Lower leg skin (tissue), 4 donors: ENCODE measurements at regions of chr9 and their contacts with region 1.

Region 1: GRCh38 chr9:20622330-20623020 is at the start of gene MLLT3:
- DNase-seq: peak; percentile 93 to 99
- H3K4me3 ChIP-seq: peak within 1 kb of the TSS; percentile 61
- CTCF ChIP-seq: no peak
- POLR2A ChIP-seq: no peak
- total RNA-seq, gene MLLT3: 10.6 to 15.2 (median 12.5) TPM

Region 2: DNA sequence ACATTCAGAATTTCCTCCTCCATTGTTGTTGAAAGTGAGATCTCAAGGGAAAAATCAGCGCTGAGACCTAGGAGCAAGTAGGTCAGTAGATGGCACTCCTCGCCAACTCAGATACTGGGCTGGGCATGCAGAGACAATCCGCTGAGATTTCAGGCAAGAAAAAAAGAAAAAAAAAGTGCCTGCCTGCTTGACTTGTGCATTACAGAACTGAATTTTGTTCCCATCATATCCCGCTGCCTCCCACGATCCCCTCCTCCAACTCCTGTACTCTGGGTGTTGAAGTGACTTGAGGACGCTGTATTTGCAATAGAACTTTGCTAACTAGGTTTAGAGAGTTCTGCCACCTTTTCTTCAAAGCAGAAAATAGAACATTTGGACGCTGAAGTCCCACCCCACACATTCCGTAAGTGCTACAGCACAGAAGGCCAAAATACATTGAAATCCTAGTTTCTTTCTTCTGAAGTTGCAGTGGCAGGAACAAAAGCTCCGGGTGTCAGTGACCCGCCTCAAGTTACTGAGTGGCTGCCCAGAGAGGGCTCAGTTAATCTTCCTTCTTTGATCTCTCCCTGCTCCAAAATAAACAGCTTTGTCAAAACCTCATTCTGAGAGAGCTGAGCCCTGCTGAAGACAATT is 266.0 kb before region 1 on chr9:
- intact Hi-C with region 1: loop called (anchors 10 kb)
- DNase-seq: peak in 1 of 2 donors; percentile 65
- H3K4me3 ChIP-seq: no peak overlapping the region
- CTCF ChIP-seq: no peak
- POLR2A ChIP-seq: no peak

Region 3: DNA sequence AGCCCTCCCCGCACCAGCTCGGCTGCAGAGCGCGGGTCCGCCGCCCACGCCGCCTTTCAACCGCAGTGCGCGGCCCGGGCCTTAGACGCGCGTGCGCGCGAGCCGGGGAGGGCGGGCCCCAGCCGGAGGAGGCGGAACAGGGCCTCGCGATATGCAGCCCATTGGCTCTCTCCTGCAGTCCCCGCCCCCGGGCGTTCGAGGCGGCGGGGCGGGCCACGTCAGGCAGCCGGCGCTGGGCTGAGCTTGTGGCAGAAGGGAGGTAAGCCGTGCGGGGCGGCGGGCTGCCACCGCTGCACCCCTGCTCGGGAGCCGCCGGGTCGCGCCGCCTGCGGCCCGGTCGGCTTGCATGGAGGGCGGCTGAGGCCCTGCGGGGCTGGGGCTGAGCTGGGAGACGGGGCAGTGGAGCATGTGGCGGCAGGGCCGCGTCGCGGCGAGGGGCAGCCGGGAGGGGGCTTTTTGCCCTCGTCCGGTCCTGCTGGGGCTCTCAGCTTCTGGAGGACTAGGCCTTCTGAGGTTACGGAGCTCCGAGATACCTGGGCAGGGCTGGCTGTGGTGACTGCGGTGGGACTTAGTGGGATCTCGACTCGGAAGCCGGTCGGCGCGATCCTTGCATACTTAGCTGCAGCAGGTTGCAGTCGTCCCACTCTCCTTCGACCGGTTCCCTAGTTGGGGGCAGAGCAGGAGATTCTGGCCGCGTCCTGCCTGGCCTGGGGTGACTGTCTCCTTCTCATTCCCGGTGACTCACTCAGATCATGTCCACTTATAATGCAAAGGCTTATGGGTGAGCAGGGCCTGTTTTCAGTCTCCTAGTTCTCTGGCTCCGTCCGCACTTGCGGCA is 61.8 kb after region 1 on chr9 and contains the start of gene FOCAD:
- intact Hi-C with region 1: loop called (anchors 5 kb)
- DNase-seq: peak; percentile 93 to 99
- H3K4me3 ChIP-seq: peak within 1 kb of the TSS; percentile 75
- CTCF ChIP-seq: no peak
- POLR2A ChIP-seq: no peak
- total RNA-seq, gene FOCAD: 13.9 to 31.2 (median 22.0) TPM

Region 4: GRCh38 chr9:20941174-20941690 is 318.8 kb after region 1 on chr9:
- intact Hi-C with region 1: loop called (anchors 10 kb)
- DNase-seq: peak in 1 of 2 donors; percentile 32
- H3K4me3 ChIP-seq: no peak overlapping the region
- CTCF ChIP-seq: no peak
- POLR2A ChIP-seq: no peak

Region 5: DNA sequence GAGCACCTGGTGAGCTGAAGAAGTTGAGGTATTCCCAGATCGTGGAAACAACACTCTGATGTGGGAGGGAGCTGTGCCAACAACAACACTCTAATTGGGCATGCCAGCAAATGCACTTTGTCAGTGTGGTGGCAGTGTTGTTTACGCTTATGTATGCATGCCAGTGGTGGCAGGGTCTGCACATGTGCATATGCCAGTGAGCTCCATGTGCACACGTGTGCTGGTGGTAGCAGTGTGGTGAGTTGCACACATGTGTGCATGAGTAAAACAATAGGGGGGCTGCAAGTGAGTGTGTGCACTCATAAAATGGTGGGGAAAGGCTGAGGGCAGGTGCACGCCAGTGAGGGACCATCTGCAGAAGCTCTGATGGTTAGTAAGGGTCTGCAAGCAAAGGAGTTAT is 1958.3 kb after region 1 on chr9:
- intact Hi-C with region 1: no loop called
- DNase-seq: no peak
- H3K4me3 ChIP-seq: no peak overlapping the region
- CTCF ChIP-seq: no peak
- POLR2A ChIP-seq: no peak